HCT116 (cell line): ENCODE measurements at regions of chr1 and their contacts with region 1.

Region 1: DNA sequence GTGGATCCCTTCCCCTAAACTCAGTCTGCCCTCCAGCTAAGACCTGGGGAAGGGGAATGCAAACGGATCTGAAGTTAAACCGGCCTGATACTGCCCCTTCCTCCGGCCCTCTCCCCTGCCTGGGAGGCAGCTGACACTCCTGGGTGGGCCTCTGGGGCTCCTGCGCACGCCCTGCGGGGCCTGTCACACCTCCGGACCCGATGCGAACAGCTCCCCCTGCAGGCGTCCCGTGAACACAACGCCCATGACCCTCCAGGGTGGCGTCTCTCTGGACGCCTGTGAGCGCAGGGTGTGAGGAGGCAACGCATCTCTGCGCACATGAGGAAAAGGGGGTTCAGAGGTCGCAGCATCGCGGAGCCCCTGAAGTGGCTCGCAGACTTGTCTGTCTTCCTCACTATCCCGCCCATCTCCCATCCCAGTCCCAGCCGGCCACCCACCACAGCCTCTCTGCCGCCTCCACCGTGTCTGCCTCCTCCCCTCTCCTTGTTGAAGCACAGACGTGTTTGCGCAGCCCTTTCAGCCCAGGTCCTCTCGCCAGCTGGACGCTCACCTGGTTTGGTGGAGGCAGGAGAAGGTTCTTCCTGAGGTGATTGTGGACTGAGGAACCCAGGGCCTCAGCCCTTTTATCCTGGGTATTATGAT is 421 bp upstream of the LCE3A start:
- DNase-seq: no peak
- ATAC-seq: peak; percentile 92
- H3K4me3 ChIP-seq: no peak overlapping the region
- H3K27ac ChIP-seq: no peak overlapping the region
- H3K4me1 ChIP-seq: no peaks in the 10 kb centered on the region
- H3K27me3 ChIP-seq: peaks cover 17% of the 10 kb centered on the region; the same call in 1 of the 2 replicates
- CTCF ChIP-seq: peak; percentile 8 to 68 (median 64); a peak in 4 of 6 replicates
- POLR2A ChIP-seq: no peak
- RAD21 ChIP-seq: no peak

Region 2: DNA sequence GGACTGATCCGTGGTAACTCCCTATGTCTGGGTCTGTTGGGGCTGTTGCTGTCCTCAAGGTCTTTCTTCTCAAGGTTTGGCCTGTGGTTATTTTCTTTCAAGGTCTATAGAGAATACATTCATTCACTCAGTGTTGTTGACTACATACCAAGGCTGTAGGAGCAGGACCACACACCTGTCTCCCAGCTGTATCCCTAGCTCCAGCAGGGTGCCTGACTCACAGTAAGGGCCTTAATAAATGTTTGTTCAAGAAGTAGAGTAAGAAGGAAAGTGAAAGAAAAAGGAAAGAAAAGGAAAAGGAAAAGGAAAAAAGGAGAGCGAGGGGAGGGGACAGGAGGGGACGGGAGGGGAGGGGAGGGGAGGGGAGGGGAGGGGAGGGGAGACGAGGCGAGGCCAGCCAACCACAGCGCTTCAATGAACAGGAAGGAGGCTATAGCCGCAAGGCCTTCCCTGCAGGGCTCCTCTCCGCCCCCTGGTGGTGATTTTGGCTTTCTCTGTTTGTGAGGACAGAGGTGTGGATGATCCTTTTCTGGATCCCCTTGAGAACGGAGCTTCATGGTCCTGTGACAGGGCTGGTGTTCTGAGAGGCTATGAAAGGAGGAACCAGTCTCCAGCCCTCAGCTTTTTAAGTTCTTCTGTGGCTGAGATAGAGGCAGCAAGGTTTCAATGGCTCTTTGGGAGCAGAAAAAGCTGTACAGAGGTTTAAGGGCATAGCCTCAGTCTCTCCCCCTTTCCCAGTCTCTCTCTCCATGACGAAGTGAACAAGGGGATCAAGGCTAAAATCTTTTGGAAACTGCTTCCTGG is 143.3 kb before region 1 on chr1:
- CTCF ChIA-PET with region 1: no interaction called
- POLR2A ChIA-PET with region 1: no interaction called
- RAD21 ChIA-PET with region 1: no interaction called
- intact Hi-C with region 1: loop called (anchors 10 kb)
- DNase-seq: peak; percentile 63
- ATAC-seq: peak; percentile 100
- H3K4me3 ChIP-seq: no peak overlapping the region
- H3K27ac ChIP-seq: no peak overlapping the region
- H3K4me1 ChIP-seq: 0 out of 4 replicates have a peak, but pooled peaks cover 0 to 3% of the 10 kb centered on the region in 2 experiments
- H3K27me3 ChIP-seq: no peaks in the 10 kb centered on the region
- CTCF ChIP-seq: peak; percentile 34 to 88 (median 68); a peak in 5 of 6 replicates
- POLR2A ChIP-seq: no peak
- RAD21 ChIP-seq: 0 out of 2 replicates have a peak, but pooled peaks have one; percentile 8

Region 3: DNA sequence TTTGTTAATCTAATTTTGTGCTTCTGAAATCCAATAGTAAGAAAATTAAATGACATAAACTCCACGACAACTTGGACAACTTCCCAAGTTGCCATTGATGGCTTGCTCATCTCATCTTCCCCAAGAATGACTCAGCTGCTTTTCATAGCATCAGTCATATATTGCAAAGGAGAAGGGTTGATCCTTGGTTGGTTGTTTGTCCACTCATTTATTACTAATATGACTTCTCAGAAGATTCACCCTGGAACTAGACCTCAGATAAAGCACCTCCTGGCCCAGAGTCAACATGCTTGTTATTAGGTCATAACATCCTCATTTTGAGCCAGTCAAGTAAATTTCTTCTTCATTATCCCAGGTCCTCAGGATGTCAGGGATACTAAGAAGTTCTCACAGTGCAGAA is 40.7 kb before region 1 on chr1:
- CTCF ChIA-PET with region 1: no interaction called
- POLR2A ChIA-PET with region 1: no interaction called
- RAD21 ChIA-PET with region 1: no interaction called
- intact Hi-C with region 1: loop called (anchors 5 kb)
- DNase-seq: no peak
- ATAC-seq: no peak
- H3K4me3 ChIP-seq: no peak overlapping the region
- H3K27ac ChIP-seq: no peak overlapping the region
- H3K4me1 ChIP-seq: no peaks in the 10 kb centered on the region
- H3K27me3 ChIP-seq: peaks cover 14% of the 10 kb centered on the region; the same call in 1 of the 2 replicates
- CTCF ChIP-seq: no peak
- POLR2A ChIP-seq: no peak
- RAD21 ChIP-seq: no peak